SK-N-SH (cell line): ENCODE measurements at regions of chr1 and their contacts with region 1.

Region 1: DNA sequence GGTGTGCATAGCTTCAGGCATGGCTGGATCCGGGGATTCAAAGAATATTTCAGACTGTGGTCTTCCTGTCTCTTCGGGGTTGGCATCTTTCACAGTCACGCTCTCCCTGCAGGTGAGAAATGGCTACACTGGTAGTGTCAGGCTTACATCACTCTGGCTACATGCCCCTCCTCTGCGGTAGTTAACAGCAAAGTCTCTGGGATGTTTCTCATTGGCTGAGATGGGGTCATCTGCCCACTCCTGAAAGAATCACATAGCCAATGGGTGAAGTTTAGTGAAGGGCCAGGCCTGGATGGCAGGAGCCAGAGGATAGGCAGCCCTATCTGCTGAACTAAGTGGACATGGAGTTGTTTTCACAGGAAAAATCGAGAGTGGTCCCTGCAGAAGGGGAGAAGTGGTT is 356.5 kb downstream of the MATN1 start:
- DNase-seq: no peak
- H3K4me3 ChIP-seq: no peak overlapping the region
- H3K27ac ChIP-seq: no peak overlapping the region
- H3K4me1 ChIP-seq: no peaks in the 10 kb centered on the region; a peak in 1 of 4 replicates
- H3K27me3 ChIP-seq: no peaks in the 10 kb centered on the region
- CTCF ChIP-seq: no peak
- EP300 ChIP-seq: no peak
- RAD21 ChIP-seq: no peak

Region 2: GRCh38 chr1:30353637-30354036 is 13.3 kb before region 1 on chr1:
- CTCF ChIA-PET with region 1: interaction called, 11 read pairs
- POLR2A ChIA-PET with region 1: no interaction called
- DNase-seq: no peak
- H3K4me3 ChIP-seq: no peak overlapping the region
- H3K27ac ChIP-seq: no peak overlapping the region
- H3K4me1 ChIP-seq: no peaks in the 10 kb centered on the region
- H3K27me3 ChIP-seq: no peaks in the 10 kb centered on the region
- CTCF ChIP-seq: no peak
- EP300 ChIP-seq: no peak
- RAD21 ChIP-seq: peak; percentile 46

Region 3: DNA sequence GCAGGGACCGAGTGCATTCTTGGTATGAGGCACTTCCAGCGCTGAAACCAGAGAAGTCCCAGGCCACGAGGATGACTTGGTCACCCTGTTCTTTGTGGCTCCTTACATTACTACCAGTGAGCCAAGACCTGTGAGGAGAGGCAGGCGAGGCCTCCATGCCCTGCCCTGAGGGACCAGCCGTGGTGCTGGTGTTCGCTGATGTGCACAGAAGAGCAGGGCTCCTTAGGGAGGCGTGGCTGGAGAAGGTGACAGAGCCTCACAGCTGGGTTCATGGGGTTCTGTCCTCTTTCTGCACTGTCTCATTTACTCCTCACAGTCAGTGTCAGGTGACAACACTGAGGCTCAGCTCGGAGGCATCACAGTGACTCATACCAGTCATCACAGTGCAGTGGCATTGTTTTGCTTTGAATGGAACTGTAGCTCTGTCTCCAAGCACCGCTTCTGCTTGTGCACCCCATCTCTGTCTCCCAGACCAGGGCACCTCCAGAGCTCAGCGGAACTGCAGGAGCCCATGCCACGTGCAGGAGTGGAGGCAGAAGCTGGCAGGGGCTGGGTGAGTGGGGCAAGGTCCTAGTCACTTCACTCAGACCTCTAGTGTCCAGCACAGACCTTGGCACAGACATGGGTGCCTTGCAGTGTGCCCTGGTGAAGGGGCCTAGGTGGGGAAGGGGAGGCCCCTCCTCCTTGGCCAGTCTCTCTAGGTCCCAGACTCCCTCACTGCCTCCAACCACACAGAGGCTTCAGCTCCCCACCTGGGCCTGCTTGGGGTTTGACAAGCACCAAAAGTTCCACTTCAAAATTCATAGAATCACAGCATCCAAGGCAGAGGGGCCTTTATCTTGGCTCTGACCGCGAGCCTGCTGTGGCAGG is 45.6 kb after region 1 on chr1:
- CTCF ChIA-PET with region 1: no interaction called
- POLR2A ChIA-PET with region 1: no interaction called
- DNase-seq: no peak
- H3K4me3 ChIP-seq: no peak overlapping the region
- H3K27ac ChIP-seq: no peak overlapping the region
- H3K4me1 ChIP-seq: peaks cover 0 to 9% of the 10 kb centered on the region in 2 experiments; a peak in 2 of 4 replicates
- H3K27me3 ChIP-seq: no peaks in the 10 kb centered on the region
- CTCF ChIP-seq: no peak
- EP300 ChIP-seq: no peak
- RAD21 ChIP-seq: no peak